Colonic mucosa (tissue), 4 donors: ENCODE measurements at regions of chr5 and their contacts with region 1.

Region 1: GRCh38 chr5:154072414-154073171 is 33.8 kb downstream of the MFAP3 start:
- DNase-seq: peak; percentile 89
- H3K4me3 ChIP-seq: no peak overlapping the region
- H3K27ac ChIP-seq: no peak overlapping the region
- H3K4me1 ChIP-seq: no peaks in the 10 kb centered on the region
- H3K27me3 ChIP-seq: no peaks in the 10 kb centered on the region
- CTCF ChIP-seq: peak; percentile 95

Region 2: GRCh38 chr5:154138701-154139100 is 66.1 kb after region 1 on chr5:
- intact Hi-C with region 1: no loop called
- DNase-seq: no peak
- H3K4me3 ChIP-seq: no peak overlapping the region
- H3K27ac ChIP-seq: no peak overlapping the region
- H3K4me1 ChIP-seq: no peaks in the 10 kb centered on the region
- H3K27me3 ChIP-seq: no peaks in the 10 kb centered on the region
- CTCF ChIP-seq: no peak

Region 3: DNA sequence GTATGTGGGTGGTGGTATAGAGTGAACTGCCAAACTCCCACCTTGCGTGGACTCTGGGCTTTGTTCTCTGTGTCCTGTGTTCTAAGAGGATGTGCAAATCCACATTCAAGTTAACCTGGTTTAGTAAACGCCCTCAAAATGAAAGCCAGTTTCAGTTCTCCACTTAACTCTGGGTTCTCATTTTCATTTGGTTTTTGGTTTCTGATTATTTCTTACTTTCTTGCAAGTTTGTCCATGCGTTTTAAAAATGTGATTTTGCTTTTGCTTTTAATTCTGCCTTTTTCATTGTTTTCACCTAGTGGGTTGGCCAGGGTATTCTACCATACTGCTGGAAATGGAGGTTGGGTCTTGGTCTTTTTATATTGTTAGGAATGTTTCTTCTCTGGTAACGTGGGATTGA is 156.1 kb after region 1 on chr5:
- intact Hi-C with region 1: no loop called
- DNase-seq: no peak
- H3K4me3 ChIP-seq: no peak overlapping the region
- H3K27ac ChIP-seq: no peak overlapping the region
- H3K4me1 ChIP-seq: no peaks in the 10 kb centered on the region
- H3K27me3 ChIP-seq: no peaks in the 10 kb centered on the region
- CTCF ChIP-seq: no peak

Region 4: DNA sequence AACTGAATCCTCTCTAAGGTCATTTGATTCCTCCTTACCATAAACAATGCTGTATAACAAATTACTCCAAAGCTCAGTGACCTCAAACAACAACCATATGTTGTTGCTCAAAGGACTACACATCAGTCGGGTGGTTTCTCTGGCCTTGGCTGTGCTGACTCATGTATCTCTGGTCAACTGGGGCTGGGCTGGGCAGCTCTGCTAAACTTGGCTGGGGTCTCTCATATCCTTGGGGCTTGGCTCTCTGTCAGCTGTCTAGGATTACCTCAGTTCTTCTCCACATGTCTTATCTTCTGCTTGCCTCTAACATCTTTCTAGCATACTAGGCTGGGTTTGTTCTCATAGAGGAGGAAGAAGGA is 204.4 kb after region 1 on chr5:
- intact Hi-C with region 1: no loop called
- DNase-seq: peak; percentile 43
- H3K4me3 ChIP-seq: no peak overlapping the region
- H3K27ac ChIP-seq: peak overlapping the region; percentile 6
- H3K4me1 ChIP-seq: peaks cover 13% of the 10 kb centered on the region
- H3K27me3 ChIP-seq: no peaks in the 10 kb centered on the region
- CTCF ChIP-seq: no peak

Region 5: DNA sequence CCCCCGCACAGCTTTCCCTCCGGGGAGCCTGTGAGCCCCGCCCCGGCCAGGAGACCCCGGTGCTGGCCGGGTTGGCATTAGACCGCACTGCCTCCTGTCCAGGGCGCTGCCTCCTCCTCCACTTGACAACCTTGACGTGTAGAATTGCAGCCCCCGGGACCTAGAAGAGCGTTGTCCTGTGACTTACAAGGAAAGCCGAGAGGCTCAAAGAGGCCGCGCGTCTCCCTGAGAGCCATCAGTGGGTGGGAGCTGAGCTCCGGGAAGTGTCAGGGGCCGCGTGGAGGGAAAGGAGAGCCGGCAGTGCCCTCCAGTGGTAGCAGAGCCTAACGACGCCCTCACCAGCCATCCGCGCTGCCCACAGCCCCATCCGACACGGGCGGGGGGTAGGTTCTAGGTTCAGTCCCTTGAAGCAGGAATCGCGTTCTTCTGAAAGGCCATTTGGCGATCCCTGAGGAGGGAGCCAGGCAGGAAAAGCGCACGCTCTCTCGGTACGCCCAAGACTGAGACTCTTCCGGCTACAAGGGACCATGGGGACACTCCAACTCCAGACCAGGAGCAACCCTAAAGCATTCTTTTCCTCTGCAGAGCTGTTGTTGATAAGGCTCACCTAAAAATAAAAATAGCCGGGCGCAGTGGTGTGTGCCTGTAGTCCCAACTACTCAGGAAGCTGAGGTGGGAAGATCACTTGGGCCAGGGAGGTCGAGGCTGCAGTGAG is 332.6 kb after region 1 on chr5:
- intact Hi-C with region 1: loop called (anchors 2 kb)
- DNase-seq: peak; percentile 77
- H3K4me3 ChIP-seq: peak overlapping the region; percentile 12
- H3K27ac ChIP-seq: no peak overlapping the region
- H3K4me1 ChIP-seq: peaks cover 8% of the 10 kb centered on the region
- H3K27me3 ChIP-seq: no peaks in the 10 kb centered on the region
- CTCF ChIP-seq: peak; percentile 84

Region 6: GRCh38 chr5:154610321-154611154 is 537.9 kb after region 1 on chr5:
- intact Hi-C with region 1: loop called (anchors 10 kb)
- DNase-seq: peak; percentile 67
- H3K4me3 ChIP-seq: peak overlapping the region; percentile 30
- H3K27ac ChIP-seq: no peak overlapping the region
- H3K4me1 ChIP-seq: peaks cover 10% of the 10 kb centered on the region
- H3K27me3 ChIP-seq: peaks cover 25% of the 10 kb centered on the region
- CTCF ChIP-seq: peak; percentile 78